HAP-1 (cell line): ENCODE measurements at regions of chr6 and their contacts with region 1.

Region 1: GRCh38 chr6:3251462-3252314 is 7.1 kb upstream of the PSMG4 start:
- DNase-seq: peak; percentile 89 to 92
- H3K4me3 ChIP-seq: no peak overlapping the region
- H3K4me1 ChIP-seq: peaks cover 16% of the 10 kb centered on the region
- H3K27me3 ChIP-seq: no peaks in the 10 kb centered on the region

Region 2: DNA sequence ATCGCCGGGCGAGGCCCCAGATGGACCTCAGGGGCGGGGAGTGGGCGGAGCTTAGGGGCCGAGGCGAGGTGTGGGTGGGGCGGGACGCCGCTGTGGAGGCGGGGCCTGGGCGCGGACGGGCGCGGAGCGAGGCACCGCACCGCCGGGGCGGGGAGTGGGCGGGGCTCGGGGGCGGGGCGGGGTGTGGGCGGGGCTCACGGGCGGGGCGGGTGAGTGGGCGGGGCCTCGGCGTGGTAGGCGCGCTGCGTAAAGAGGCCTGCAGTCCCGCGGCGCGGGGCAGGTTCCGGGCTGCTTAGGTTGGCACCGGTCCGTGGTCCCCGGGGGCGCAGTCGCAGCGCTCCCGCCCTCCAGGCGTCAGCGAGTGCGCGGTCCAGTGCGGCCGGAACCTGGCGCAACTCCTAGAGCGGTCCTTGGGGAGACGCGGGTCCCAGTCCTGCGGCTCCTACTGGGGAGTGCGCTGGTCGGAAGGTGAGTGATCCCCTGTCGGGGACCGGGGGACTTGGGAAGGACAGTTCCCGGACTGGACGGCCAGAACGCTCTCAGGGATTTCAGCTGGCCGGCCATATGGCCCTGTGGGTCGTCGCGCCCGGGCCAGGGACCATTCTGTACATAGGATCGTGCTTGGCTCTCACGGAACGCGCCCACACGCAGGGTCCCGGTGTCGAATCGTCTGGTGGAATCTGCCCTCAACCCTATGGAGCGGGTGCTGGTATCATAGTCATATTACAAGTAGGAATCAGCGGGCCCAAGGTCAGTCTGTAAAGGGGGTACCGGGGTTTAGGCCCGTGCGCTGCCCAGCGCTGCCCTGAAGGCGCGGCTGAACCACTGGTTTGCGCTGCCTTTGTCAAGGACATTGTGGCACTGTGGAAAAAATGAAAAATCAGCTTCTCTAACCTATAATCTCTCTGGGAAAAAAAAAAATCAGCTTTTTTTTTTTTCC is 251.8 kb before region 1 on chr6 and contains the start of gene NQO2:
- in situ Hi-C with region 1: loop called (anchors 5 kb)
- DNase-seq: peak; percentile 81 to 97
- H3K4me3 ChIP-seq: peak within 1 kb of the TSS; percentile 90
- H3K4me1 ChIP-seq: peaks cover 22% of the 10 kb centered on the region
- H3K27me3 ChIP-seq: no peaks in the 10 kb centered on the region

Region 3: GRCh38 chr6:3124667-3125066 is 127.0 kb before region 1 on chr6:
- in situ Hi-C with region 1: loop called (anchors 5 kb)
- DNase-seq: no peak
- H3K4me3 ChIP-seq: no peak overlapping the region
- H3K4me1 ChIP-seq: no peaks in the 10 kb centered on the region
- H3K27me3 ChIP-seq: no peaks in the 10 kb centered on the region